Activated CD4-positive, alpha-beta memory T cell treated with anti-CD3 and anti-CD28 coated beads, Interleukin-2, amount 10 ng/mL, durations not matched to agents 7 days and 5 days (primary cell): ENCODE measurements at regions of chr21 and their contacts with region 1.

Region 1: DNA sequence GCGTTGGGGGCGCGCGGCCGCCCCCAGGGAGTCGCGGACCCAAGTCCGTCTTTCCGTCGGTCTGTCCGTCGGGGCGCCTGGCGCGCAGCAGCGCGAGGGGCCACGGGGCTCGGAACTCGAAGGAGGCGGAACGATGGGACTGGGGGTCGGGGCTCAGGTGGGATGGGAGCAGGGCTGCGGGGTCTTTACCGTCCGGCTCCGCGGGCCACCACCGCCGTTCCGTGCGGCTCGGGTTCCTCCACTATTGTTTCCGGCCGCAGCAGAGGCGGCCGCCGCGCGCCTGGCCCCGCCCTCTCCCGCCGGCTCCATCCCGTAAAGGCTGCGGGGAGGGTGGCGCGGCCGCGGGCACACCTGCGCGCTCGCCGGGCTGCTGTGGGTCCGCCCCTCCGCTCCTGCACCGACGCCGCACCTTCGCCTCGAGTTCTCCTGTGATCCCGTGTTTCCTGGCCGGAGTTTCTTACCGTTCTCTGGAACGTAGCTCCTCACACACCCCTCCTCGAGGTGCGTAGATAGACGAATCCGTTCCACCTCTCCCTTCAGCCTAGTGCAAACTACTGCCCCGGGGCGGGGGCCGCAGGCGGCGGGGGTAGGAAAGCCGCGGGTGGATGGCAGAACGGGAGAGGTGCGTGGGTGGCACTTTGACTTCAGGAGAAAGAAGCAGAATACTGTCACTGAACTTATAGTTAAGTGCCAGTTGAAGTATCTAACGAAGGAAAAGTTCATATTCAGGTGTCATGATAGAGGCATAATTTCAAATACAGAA is at the start of gene C21orf91:
- DNase-seq: peak; percentile 92
- H3K4me3 Mint-ChIP-seq: peak within 1 kb of the TSS; percentile 88
- H3K27ac Mint-ChIP-seq: peak within 1 kb of the TSS; percentile 99
- H3K4me1 Mint-ChIP-seq: peaks cover 44% of the 10 kb centered on the region
- H3K27me3 Mint-ChIP-seq: no peaks in the 10 kb centered on the region
- total RNA-seq, gene C21orf91: 55.9 to 57.1 TPM

Region 2: DNA sequence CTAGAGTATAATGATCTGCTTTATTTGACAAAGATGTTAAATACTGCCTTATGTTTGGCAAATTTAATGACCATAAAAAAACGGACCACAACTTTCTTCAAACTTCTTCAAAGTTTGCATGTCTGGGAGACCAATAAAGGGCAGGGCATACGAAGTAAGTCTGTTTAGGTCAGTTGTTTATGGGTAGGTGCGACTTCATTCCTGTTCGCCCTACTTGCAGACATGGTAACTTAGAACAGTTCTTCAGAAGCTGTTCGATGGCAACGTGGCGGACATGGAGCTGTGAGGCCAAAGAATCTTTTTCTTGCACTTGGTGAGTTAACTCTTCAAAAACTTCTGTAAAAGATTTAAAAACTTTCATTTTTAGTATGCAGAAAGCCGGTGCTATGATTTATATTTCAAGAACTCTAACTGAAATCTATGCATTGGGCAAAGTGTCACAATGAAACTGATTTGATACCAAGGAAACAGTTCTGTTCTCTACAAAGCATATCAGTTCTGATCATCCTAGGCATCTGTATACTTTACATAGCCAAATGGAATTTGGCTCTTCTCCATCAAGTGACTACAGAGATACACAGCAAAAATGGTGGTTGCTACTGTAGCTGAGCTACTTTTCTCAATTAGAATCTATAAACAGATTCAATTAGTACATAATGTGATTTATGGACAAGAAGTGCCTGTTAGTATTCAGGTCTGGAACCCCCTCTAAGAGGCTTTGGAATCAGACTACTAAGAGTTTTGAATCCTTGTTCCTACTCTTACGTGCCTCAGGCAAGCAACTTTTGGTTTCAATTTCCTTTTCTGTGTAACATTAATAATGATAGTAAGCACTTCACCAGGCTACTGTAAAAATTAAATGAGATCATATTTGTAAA is 25.8 kb before region 1 on chr21:
- CTCF ChIA-PET with region 1: interaction called, 4 read pairs
- POLR2A ChIA-PET with region 1: interaction called, 94 read pairs
- DNase-seq: no peak
- H3K4me3 Mint-ChIP-seq: peak overlapping the region; percentile 75
- H3K27ac Mint-ChIP-seq: peak overlapping the region; percentile 90
- H3K4me1 Mint-ChIP-seq: peaks cover 72% of the 10 kb centered on the region
- H3K27me3 Mint-ChIP-seq: no peaks in the 10 kb centered on the region

Region 3: DNA sequence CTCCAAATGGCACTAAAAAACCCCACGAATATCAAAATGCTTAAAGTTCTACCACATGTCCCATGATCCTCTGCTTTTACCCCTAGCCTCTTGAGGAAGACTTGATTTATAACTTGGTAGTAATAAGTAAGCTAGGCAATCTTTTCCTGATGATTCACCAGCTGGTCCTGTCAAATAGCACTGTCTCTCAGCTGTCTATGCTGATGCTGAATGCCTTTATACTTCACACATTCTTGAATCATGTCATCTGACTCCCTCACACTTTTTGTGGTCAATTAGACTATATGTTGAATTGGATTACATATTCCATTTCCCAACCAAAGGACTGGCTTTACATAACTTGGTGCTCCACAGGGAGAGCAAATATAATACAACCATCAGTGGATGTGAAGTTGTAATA is 16.7 kb before region 1 on chr21:
- CTCF ChIA-PET with region 1: no interaction called
- POLR2A ChIA-PET with region 1: interaction called, 32 read pairs
- DNase-seq: no peak
- H3K4me3 Mint-ChIP-seq: no peak overlapping the region
- H3K27ac Mint-ChIP-seq: no peak overlapping the region
- H3K4me1 Mint-ChIP-seq: peaks cover 40% of the 10 kb centered on the region
- H3K27me3 Mint-ChIP-seq: no peaks in the 10 kb centered on the region